Activated CD4-positive, alpha-beta T cell treated with anti-CD3 and anti-CD28 coated beads for 36 hours (primary cell): ENCODE measurements at regions of chr12 and their contacts with region 1.

Region 1: GRCh38 chr12:123972457-123973401 is at the starts of genes CCDC92 and ZNF664:
- DNase-seq: peak; percentile 98
- ATAC-seq: peak; percentile 87
- H3K4me3 Mint-ChIP-seq: peak within 1 kb of the TSS; percentile 87
- H3K27ac Mint-ChIP-seq: peak within 1 kb of the TSS; percentile 89
- H3K4me1 Mint-ChIP-seq: peaks cover 48% of the 10 kb centered on the region
- H3K27me3 Mint-ChIP-seq: no peaks in the 10 kb centered on the region
- total RNA-seq, gene CCDC92: 8.7 to 11.0 TPM
- total RNA-seq, gene ZNF664: 46.4 to 48.3 TPM

Region 2: GRCh38 chr12:123633379-123634141 is 339.2 kb before region 1 on chr12 and contains the starts of genes EIF2B1 and GTF2H3:
- CTCF ChIA-PET with region 1: no interaction called
- POLR2A ChIA-PET with region 1: no interaction called
- intact Hi-C with region 1: loop called in 1 of 2 experiments (anchors 1 kb)
- DNase-seq: peak; percentile 99
- ATAC-seq: peak; percentile 97
- H3K4me3 Mint-ChIP-seq: peak within 1 kb of the TSS; percentile 93
- H3K27ac Mint-ChIP-seq: peak within 1 kb of the TSS; percentile 96
- H3K4me1 Mint-ChIP-seq: peaks cover 19% of the 10 kb centered on the region
- H3K27me3 Mint-ChIP-seq: no peaks in the 10 kb centered on the region
- total RNA-seq, gene EIF2B1: 52.7 to 61.0 TPM
- total RNA-seq, gene GTF2H3: 60.4 to 77.1 TPM

Region 3: GRCh38 chr12:123905319-123905925 is 67.3 kb before region 1 on chr12:
- CTCF ChIA-PET with region 1: interaction called, 10 read pairs
- POLR2A ChIA-PET with region 1: interaction called, 3 read pairs
- intact Hi-C with region 1: loop called in 1 of 2 experiments (anchors 1 kb)
- DNase-seq: peak; percentile 83
- ATAC-seq: peak; percentile 63
- H3K4me3 Mint-ChIP-seq: no peak overlapping the region
- H3K27ac Mint-ChIP-seq: no peak overlapping the region
- H3K4me1 Mint-ChIP-seq: peaks cover 9% of the 10 kb centered on the region
- H3K27me3 Mint-ChIP-seq: peaks cover 7% of the 10 kb centered on the region

Region 4: GRCh38 chr12:123938679-123939480 is 33.8 kb before region 1 on chr12:
- CTCF ChIA-PET with region 1: interaction called, 3 read pairs
- POLR2A ChIA-PET with region 1: no interaction called
- intact Hi-C with region 1: loop called in 1 of 2 experiments (anchors 5 kb)
- DNase-seq: peak; percentile 53
- ATAC-seq: peak; percentile 33
- H3K4me3 Mint-ChIP-seq: peak overlapping the region; percentile 59
- H3K27ac Mint-ChIP-seq: peak overlapping the region; percentile 85
- H3K4me1 Mint-ChIP-seq: peaks cover 21% of the 10 kb centered on the region
- H3K27me3 Mint-ChIP-seq: no peaks in the 10 kb centered on the region

Region 5: DNA sequence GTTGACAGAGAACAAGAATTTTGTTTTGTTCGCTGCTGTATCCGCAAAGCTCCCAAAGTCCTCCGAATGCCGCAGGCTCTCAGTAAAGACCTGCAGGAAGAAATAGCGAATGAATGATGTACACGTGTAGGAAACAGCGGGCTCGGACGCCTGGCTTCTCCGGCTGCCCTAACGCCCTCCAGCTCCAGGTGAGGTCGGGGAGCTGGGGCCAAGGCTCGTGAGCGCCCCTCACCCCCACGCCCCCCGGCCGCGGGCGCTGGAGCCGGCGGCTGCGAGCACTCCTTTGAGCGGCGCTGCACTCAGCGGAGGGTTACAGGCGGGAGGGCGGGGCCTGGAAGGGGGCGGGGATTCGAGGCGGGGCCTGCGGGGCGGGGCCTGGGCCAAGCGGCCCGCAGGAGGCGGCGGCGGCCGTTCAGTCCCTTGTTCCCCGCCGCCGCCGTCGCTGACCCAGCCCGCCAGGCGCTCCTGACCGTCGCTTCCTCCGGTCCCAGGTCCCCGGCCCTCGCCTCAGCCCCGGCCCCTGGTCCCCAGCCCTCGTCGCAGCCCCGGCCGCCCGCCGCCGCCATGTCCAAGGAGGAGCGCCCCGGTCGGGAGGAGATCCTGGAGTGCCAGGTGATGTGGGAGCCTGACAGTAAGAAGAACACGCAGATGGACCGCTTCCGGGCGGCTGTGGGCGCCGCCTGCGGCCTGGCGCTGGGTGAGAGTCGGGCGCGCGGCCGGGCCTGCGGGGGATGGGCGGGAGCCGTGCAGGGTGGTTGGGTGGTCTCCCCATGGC is 1092.5 kb after region 1 on chr12 and contains the start of gene AACS:
- CTCF ChIA-PET with region 1: no interaction called
- POLR2A ChIA-PET with region 1: no interaction called
- intact Hi-C with region 1: loop called in 1 of 2 experiments (anchors 1 kb)
- DNase-seq: peak; percentile 89
- ATAC-seq: peak; percentile 98
- H3K4me3 Mint-ChIP-seq: peak within 1 kb of the TSS; percentile 71
- H3K27ac Mint-ChIP-seq: peak within 1 kb of the TSS; percentile 37
- H3K4me1 Mint-ChIP-seq: peaks cover 13% of the 10 kb centered on the region
- H3K27me3 Mint-ChIP-seq: peaks cover 8% of the 10 kb centered on the region
- total RNA-seq, gene AACS: 13.9 to 16.6 TPM